B cell (primary cell): ENCODE measurements at regions of chr2 and their contacts with region 1.

Region 1: GRCh38 chr2:190088917-190089316 is 26.4 kb upstream of the MSTN start:
- DNase-seq: peak; percentile 71
- ATAC-seq: peak; percentile 47
- H3K4me3 ChIP-seq: no peak overlapping the region
- H3K4me3 Mint-ChIP-seq: no peak overlapping the region
- H3K27ac ChIP-seq: no peak overlapping the region
- H3K27ac Mint-ChIP-seq: no peak overlapping the region
- H3K4me1 ChIP-seq: no peaks in the 10 kb centered on the region
- H3K4me1 Mint-ChIP-seq: no peaks in the 10 kb centered on the region
- H3K27me3 ChIP-seq: no peaks in the 10 kb centered on the region
- H3K27me3 Mint-ChIP-seq: no peaks in the 10 kb centered on the region
- CTCF ChIP-seq: peak; percentile 83

Region 2: GRCh38 chr2:190121971-190122370 is 33.1 kb after region 1 on chr2:
- CTCF ChIA-PET with region 1: interaction called, 7 read pairs
- POLR2A ChIA-PET with region 1: no interaction called
- intact Hi-C with region 1: loop called (anchors 1 kb)
- DNase-seq: peak; percentile 14
- ATAC-seq: no peak
- H3K4me3 ChIP-seq: no peak overlapping the region
- H3K4me3 Mint-ChIP-seq: no peak overlapping the region
- H3K27ac ChIP-seq: no peak overlapping the region
- H3K27ac Mint-ChIP-seq: no peak overlapping the region
- H3K4me1 ChIP-seq: peaks cover 0 to 13% of the 10 kb centered on the region in 2 donors
- H3K4me1 Mint-ChIP-seq: peaks cover 27% of the 10 kb centered on the region
- H3K27me3 ChIP-seq: no peaks in the 10 kb centered on the region
- H3K27me3 Mint-ChIP-seq: no peaks in the 10 kb centered on the region
- CTCF ChIP-seq: peak; percentile 24

Region 3: DNA sequence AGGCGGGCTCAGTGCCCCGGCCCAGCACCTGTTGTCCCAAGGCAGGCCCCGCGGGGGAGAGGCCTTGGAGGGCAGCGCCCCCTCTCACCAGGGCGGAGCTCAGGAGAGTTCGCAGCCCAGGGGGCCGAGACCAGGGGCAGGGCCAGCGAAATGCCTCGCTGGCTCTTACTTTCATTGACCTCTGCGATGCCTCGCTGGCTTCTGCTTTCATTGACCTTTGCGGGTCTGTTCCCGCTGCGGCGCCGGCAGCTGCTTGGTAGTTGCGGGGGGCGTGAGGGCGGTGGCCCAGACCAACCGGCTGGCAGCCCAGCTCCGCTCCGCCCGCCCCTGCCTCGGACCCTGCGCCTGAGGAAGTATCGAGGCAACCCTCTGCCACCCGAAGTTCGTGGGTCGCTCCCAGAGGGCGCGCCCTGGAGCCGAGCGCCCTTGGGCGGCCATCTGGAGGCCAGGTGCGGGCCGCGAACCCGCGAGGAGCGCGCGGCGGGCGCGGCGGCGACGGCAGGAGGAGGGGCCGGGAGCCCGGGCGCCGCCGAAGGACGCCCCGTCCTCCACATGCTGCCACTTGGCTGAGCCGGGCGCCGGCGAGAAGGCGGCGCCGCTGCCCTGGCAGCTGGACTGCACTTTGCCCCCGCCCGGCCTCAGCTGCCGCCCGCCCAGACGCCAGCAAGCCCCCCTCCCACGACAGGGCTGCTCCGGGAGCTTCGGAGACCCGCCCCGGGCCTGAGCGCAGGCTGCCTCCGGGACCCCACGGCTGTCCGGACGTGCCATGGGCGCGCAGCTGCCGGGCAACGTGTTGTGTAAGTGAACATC is 91.6 kb after region 1 on chr2:
- CTCF ChIA-PET with region 1: interaction called, 14 read pairs
- POLR2A ChIA-PET with region 1: no interaction called
- intact Hi-C with region 1: loop called (anchors 5 kb)
- DNase-seq: peak; percentile 70
- ATAC-seq: peak; percentile 89
- H3K4me3 ChIP-seq: peak overlapping the region in 4 of 5 experiments; percentile 48 to 71 (median 60)
- H3K4me3 Mint-ChIP-seq: peak overlapping the region; percentile 87
- H3K27ac ChIP-seq: no peak overlapping the region
- H3K27ac Mint-ChIP-seq: peak overlapping the region; percentile 85
- H3K4me1 ChIP-seq: peaks cover 16 to 22% of the 10 kb centered on the region in 2 donors
- H3K4me1 Mint-ChIP-seq: peaks cover 26% of the 10 kb centered on the region
- H3K27me3 ChIP-seq: peaks cover 0 to 9% (median 0%) of the 10 kb centered on the region in 4 experiments
- H3K27me3 Mint-ChIP-seq: no peaks in the 10 kb centered on the region
- CTCF ChIP-seq: peak; percentile 31

Region 4: GRCh38 chr2:190277234-190278112 is 188.6 kb after region 1 on chr2:
- CTCF ChIA-PET with region 1: interaction called, 13 read pairs
- POLR2A ChIA-PET with region 1: no interaction called
- intact Hi-C with region 1: loop called (anchors 1 kb)
- DNase-seq: peak; percentile 31
- ATAC-seq: no peak
- H3K4me3 ChIP-seq: no peak overlapping the region
- H3K4me3 Mint-ChIP-seq: no peak overlapping the region
- H3K27ac ChIP-seq: no peak overlapping the region
- H3K27ac Mint-ChIP-seq: no peak overlapping the region
- H3K4me1 ChIP-seq: no peaks in the 10 kb centered on the region
- H3K4me1 Mint-ChIP-seq: no peaks in the 10 kb centered on the region
- H3K27me3 ChIP-seq: no peaks in the 10 kb centered on the region
- H3K27me3 Mint-ChIP-seq: no peaks in the 10 kb centered on the region
- CTCF ChIP-seq: peak; percentile 63

Region 5: DNA sequence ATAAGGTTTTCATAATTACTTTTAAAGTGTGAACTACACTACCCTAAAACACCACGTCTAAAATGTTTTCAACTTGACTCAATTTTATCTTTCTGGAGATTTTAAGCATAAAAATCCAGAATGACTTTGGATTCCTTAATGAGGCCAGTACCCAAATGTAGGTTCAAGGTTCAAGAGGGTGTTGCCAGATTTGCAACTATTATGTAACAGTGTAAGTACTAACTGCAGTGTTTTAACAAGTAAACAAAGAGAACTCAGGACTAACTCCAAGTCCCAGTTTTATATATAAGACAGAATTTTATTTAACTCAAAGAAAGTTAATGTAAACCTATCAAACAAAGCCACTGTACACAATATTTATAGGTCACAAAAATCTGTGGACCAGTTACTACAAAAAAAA is 225.0 kb after region 1 on chr2:
- CTCF ChIA-PET with region 1: interaction called, 3 read pairs
- POLR2A ChIA-PET with region 1: no interaction called
- intact Hi-C with region 1: loop called (anchors 2 kb)
- DNase-seq: no peak
- ATAC-seq: no peak
- H3K4me3 ChIP-seq: no peak overlapping the region
- H3K4me3 Mint-ChIP-seq: no peak overlapping the region
- H3K27ac ChIP-seq: no peak overlapping the region
- H3K27ac Mint-ChIP-seq: no peak overlapping the region
- H3K4me1 ChIP-seq: peaks cover 9 to 17% of the 10 kb centered on the region in 2 donors
- H3K4me1 Mint-ChIP-seq: peaks cover 28% of the 10 kb centered on the region
- H3K27me3 ChIP-seq: no peaks in the 10 kb centered on the region
- H3K27me3 Mint-ChIP-seq: no peaks in the 10 kb centered on the region
- CTCF ChIP-seq: no peak

Region 6: GRCh38 chr2:190376591-190377245 is 287.8 kb after region 1 on chr2:
- CTCF ChIA-PET with region 1: interaction called, 7 read pairs
- POLR2A ChIA-PET with region 1: no interaction called
- intact Hi-C with region 1: loop called (anchors 1 kb)
- DNase-seq: no peak
- ATAC-seq: no peak
- H3K4me3 ChIP-seq: no peak overlapping the region
- H3K4me3 Mint-ChIP-seq: no peak overlapping the region
- H3K27ac ChIP-seq: no peak overlapping the region
- H3K27ac Mint-ChIP-seq: no peak overlapping the region
- H3K4me1 ChIP-seq: no peaks in the 10 kb centered on the region
- H3K4me1 Mint-ChIP-seq: peaks cover 2% of the 10 kb centered on the region
- H3K27me3 ChIP-seq: no peaks in the 10 kb centered on the region
- H3K27me3 Mint-ChIP-seq: no peaks in the 10 kb centered on the region
- CTCF ChIP-seq: no peak

Region 7: DNA sequence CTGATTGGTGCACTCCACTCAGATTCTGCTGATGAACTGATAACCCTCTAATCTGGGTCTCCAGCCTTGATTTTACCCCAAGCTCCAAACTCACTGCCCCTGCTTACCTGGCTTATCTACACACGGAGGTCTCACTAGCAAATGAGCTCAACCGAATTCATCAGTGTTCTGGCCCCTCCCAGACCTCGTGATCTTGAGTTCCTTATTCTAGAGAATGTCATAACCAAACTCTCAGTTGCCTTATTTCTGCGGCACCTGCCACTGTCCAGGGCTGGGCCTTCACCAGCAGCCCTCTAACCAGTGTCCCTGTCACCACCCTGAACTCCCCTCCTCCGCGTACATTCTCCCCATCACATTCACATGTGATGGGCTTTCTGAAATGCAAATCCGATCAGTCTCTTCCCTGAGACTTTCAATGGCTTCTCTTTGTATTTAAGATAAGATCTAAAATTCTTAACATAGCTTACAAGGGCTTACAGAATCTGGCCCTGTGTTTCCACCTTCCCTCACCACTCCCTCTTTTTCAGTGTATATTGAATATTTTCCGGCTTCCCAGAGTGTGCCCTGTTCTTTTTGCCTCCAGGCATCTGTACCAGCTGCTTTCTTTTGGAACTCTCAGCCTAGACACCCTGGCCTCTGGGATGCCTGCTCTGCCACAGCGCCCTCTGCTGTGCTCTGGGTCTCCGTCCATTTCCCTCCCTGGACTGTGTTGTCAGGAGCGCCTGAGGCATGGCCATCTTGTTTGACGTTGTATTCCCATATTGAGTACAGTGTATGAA is 591.1 kb after region 1 on chr2:
- CTCF ChIA-PET with region 1: interaction called, 5 read pairs
- POLR2A ChIA-PET with region 1: no interaction called
- intact Hi-C with region 1: loop called (anchors 10 kb)
- DNase-seq: peak; percentile 72
- ATAC-seq: peak; percentile 86
- H3K4me3 ChIP-seq: peak overlapping the region in 1 of 5 experiments; percentile 1
- H3K4me3 Mint-ChIP-seq: peak overlapping the region; percentile 62
- H3K27ac ChIP-seq: peak overlapping the region; percentile 27 to 37
- H3K27ac Mint-ChIP-seq: peak overlapping the region; percentile 88
- H3K4me1 ChIP-seq: peaks cover 14 to 21% of the 10 kb centered on the region in 2 donors
- H3K4me1 Mint-ChIP-seq: peaks cover 38% of the 10 kb centered on the region
- H3K27me3 ChIP-seq: no peaks in the 10 kb centered on the region
- H3K27me3 Mint-ChIP-seq: no peaks in the 10 kb centered on the region
- CTCF ChIP-seq: peak; percentile 78